CD4-positive, alpha-beta T cell (primary cell): ENCODE measurements at regions of chr5 and their contacts with region 1.

Region 1: GRCh38 chr5:78984439-78985115 is 533 bp downstream of the ARSB start:
- DNase-seq: peak; percentile 49 to 90 (median 70)
- ATAC-seq: peak; percentile 76
- H3K4me3 ChIP-seq: peak overlapping the region; percentile 68
- H3K4me3 Mint-ChIP-seq: peak overlapping the region; percentile 97
- H3K27ac ChIP-seq: peak overlapping the region; percentile 51 to 77
- H3K27ac Mint-ChIP-seq: peak overlapping the region; percentile 98
- H3K4me1 ChIP-seq: peaks cover 14% of the 10 kb centered on the region
- H3K4me1 Mint-ChIP-seq: peaks cover 33% of the 10 kb centered on the region
- H3K27me3 ChIP-seq: no peaks in the 10 kb centered on the region
- H3K27me3 Mint-ChIP-seq: no peaks in the 10 kb centered on the region
- CTCF ChIP-seq: peak; percentile 9

Region 2: DNA sequence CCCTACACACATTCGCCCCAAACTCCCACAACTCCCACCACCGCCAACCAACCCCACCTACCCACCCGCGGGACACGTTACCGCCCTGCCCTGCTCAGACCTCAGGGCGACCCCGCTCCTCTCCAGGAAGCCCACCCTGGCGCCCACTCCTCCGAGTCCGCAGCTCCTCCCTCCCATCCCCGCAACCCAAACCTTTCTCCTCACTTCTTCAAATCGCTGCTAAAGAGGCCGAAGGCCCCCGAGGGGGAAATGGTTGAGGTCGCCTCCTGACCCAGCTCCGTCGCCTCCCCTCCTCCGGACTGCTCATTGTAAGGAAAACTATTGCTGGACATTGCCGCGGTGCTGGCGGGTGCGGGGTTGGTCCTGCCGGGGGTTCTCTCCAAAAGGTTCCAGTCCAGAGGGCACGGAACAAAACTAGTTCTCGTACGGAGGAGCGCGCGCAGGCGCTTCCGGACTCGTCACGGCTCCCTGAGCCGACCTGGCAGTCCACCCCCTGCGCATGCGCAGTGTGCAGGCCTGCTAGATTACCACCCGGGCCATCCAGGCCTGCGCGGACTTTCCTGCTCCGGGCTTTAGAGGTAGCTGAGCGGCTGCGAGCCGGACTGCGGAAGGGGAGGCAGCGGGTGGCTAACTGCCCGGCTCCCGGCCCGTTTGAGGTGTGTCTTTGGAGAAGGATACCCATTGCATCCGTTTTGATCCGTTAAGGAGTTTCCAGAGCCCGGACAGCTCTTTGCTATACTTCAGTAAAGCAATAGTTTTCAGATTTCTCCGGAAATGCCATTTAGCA is 690.1 kb before region 1 on chr5 and contains the start of gene AP3B1:
- CTCF ChIA-PET with region 1: no interaction called
- POLR2A ChIA-PET with region 1: interaction called, 3 read pairs
- intact Hi-C with region 1: loop called in 1 of 2 experiments (anchors 10 kb)
- DNase-seq: peak; percentile 92 to 99 (median 96)
- ATAC-seq: peak; percentile 90
- H3K4me3 ChIP-seq: peak within 1 kb of the TSS; percentile 96
- H3K4me3 Mint-ChIP-seq: peak within 1 kb of the TSS; percentile 96
- H3K27ac ChIP-seq: peak within 1 kb of the TSS; percentile 70 to 81
- H3K27ac Mint-ChIP-seq: peak within 1 kb of the TSS; percentile 94
- H3K4me1 ChIP-seq: peaks cover 19% of the 10 kb centered on the region
- H3K4me1 Mint-ChIP-seq: peaks cover 44% of the 10 kb centered on the region
- H3K27me3 ChIP-seq: no peaks in the 10 kb centered on the region
- H3K27me3 Mint-ChIP-seq: no peaks in the 10 kb centered on the region
- CTCF ChIP-seq: no peak
- total RNA-seq, gene AP3B1: 24.5 to 24.6 TPM

Region 3: DNA sequence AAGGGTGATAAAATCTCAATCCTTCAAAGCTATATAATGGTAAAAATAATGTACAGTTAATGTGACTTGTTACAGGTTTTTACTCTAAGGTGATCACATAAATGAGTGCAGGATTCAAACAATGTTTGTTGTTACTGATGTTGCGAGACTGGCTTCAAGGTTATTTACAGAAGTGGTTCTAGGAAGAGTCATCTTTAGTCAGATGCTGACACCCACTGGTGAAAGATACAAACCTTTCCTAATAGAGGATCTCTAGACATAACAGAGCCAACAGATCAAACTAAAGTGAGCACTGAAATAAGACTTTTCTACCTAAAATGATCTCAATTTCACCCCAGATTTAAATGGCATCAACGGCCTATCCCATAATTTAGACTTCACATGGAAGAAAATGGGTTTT is 19.7 kb before region 1 on chr5:
- CTCF ChIA-PET with region 1: no interaction called
- POLR2A ChIA-PET with region 1: no interaction called
- intact Hi-C with region 1: loop called in 1 of 2 experiments (anchors 1 kb)
- DNase-seq: peak in 2 of 14 experiments; percentile 18 to 22
- ATAC-seq: no peak
- H3K4me3 ChIP-seq: no peak overlapping the region
- H3K4me3 Mint-ChIP-seq: no peak overlapping the region
- H3K27ac ChIP-seq: no peak overlapping the region
- H3K27ac Mint-ChIP-seq: no peak overlapping the region
- H3K4me1 ChIP-seq: no peaks in the 10 kb centered on the region
- H3K4me1 Mint-ChIP-seq: no peaks in the 10 kb centered on the region
- H3K27me3 ChIP-seq: no peaks in the 10 kb centered on the region
- H3K27me3 Mint-ChIP-seq: no peaks in the 10 kb centered on the region
- CTCF ChIP-seq: no peak

Region 4: DNA sequence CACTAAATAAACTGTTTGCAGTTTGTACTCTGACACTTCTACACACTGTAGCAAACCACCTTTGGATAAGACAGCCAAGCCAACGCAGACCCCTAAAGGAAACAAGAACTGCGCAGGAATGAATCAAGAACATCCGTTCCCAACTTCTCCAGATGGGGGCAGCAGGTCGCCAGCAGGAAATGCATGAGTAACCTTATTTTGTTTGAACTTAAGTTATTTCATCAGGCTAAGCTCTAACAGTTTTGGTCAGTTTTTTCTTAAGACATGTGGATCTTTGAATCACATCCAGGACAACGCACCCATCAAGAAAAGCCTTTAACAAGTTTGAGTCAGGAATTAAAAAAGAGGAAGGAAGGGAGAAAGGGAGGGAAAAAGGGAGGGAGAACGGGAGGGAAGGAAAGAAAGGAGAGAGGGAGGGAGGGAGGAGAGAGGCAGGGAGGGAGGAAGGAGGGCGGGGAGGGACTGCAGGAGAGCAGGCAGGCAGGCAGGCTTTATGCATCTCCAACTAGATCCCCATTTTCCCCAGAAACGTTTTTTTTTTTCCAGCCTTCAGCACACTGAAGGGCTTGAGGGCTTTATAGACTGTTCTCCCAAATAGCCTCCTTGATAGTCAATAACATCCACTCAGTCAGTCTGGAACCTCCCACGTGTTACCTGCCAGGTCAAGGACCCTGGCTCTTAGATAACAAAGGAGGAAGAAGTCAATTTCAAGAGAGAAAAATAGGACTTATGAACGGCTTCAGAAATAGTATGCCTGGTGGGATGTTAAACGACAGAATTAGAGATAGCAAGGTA is 149.3 kb after region 1 on chr5:
- CTCF ChIA-PET with region 1: no interaction called
- POLR2A ChIA-PET with region 1: interaction called, 26 read pairs
- intact Hi-C with region 1: loop called in 1 of 2 experiments (anchors 5 kb)
- DNase-seq: peak; percentile 21 to 77 (median 55)
- ATAC-seq: peak; percentile 83
- H3K4me3 ChIP-seq: peak overlapping the region; percentile 17
- H3K4me3 Mint-ChIP-seq: peak overlapping the region; percentile 70
- H3K27ac ChIP-seq: no peak overlapping the region
- H3K27ac Mint-ChIP-seq: no peak overlapping the region
- H3K4me1 ChIP-seq: peaks cover 11% of the 10 kb centered on the region
- H3K4me1 Mint-ChIP-seq: peaks cover 10% of the 10 kb centered on the region
- H3K27me3 ChIP-seq: no peaks in the 10 kb centered on the region
- H3K27me3 Mint-ChIP-seq: peaks cover 4% of the 10 kb centered on the region
- CTCF ChIP-seq: peak; percentile 62

Region 5: GRCh38 chr5:79612667-79613198 is 628.2 kb after region 1 on chr5:
- CTCF ChIA-PET with region 1: no interaction called
- POLR2A ChIA-PET with region 1: no interaction called
- intact Hi-C with region 1: loop called in 1 of 2 experiments (anchors 10 kb)
- DNase-seq: no peak
- ATAC-seq: no peak
- H3K4me3 ChIP-seq: peak overlapping the region; percentile 81
- H3K4me3 Mint-ChIP-seq: peak overlapping the region; percentile 91
- H3K27ac ChIP-seq: peak overlapping the region; percentile 76 to 90
- H3K27ac Mint-ChIP-seq: peak overlapping the region; percentile 98
- H3K4me1 ChIP-seq: peaks cover 14% of the 10 kb centered on the region
- H3K4me1 Mint-ChIP-seq: peaks cover 42% of the 10 kb centered on the region
- H3K27me3 ChIP-seq: no peaks in the 10 kb centered on the region
- H3K27me3 Mint-ChIP-seq: no peaks in the 10 kb centered on the region
- CTCF ChIP-seq: no peak

Region 6: DNA sequence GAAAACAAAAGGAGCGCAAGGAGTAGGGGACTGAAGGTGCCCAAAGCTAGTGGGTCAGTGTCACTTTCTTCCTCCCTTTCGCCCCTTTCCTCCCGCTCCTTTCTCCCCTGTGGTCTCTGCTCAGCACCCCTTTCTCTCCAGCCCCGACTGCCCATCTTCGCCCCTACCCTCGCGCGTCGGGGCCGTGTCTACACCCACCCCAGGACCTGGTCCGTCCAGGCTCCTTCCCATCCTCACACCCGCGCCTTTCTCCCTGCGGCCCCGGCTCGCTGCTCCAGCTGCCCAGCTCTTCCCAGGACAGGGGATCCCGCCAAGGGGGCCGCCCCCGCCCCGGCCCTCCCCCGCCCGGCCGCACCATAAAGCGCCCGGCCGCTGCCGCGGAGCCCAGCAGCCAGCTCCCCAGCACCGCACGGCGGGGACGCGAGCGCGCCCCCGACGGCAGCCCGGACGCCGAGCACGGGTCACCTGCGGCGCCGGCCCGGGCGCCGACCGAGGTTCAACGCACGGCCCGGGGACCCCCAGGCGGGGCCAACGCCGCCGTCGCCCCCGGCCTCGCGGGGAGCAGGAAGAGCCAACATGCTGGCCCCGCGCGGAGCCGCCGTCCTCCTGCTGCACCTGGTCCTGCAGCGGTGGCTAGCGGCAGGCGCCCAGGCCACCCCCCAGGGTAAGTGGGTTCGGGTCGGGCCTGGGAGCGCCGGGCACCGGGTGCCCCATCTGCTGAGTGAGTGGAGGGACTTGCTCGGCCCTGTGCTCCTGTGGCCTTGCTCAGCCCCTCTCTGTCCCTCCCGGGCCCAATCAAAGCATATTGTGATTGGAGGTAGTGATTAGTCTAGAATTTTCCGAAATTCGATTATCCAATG is 1050.6 kb after region 1 on chr5 and contains the start of gene THBS4:
- CTCF ChIA-PET with region 1: no interaction called
- POLR2A ChIA-PET with region 1: no interaction called
- intact Hi-C with region 1: no loop called
- DNase-seq: peak in 1 of 14 experiments; percentile 6
- ATAC-seq: no peak
- H3K4me3 ChIP-seq: no peak within 1 kb of the TSS
- H3K4me3 Mint-ChIP-seq: peak within 1 kb of the TSS; percentile 20
- H3K27ac ChIP-seq: no peak within 1 kb of the TSS
- H3K27ac Mint-ChIP-seq: no peak within 1 kb of the TSS
- H3K4me1 ChIP-seq: peaks cover 7% of the 10 kb centered on the region
- H3K4me1 Mint-ChIP-seq: peaks cover 20% of the 10 kb centered on the region
- H3K27me3 ChIP-seq: peaks cover 35 to 49% of the 10 kb centered on the region in 2 experiments
- H3K27me3 Mint-ChIP-seq: peaks cover 79% of the 10 kb centered on the region
- CTCF ChIP-seq: no peak
- total RNA-seq, gene THBS4: 0.47 to 0.85 TPM